Prostate gland (tissue), 2 donors: ENCODE measurements at regions of chr2 and their contacts with region 1.

Region 1: DNA sequence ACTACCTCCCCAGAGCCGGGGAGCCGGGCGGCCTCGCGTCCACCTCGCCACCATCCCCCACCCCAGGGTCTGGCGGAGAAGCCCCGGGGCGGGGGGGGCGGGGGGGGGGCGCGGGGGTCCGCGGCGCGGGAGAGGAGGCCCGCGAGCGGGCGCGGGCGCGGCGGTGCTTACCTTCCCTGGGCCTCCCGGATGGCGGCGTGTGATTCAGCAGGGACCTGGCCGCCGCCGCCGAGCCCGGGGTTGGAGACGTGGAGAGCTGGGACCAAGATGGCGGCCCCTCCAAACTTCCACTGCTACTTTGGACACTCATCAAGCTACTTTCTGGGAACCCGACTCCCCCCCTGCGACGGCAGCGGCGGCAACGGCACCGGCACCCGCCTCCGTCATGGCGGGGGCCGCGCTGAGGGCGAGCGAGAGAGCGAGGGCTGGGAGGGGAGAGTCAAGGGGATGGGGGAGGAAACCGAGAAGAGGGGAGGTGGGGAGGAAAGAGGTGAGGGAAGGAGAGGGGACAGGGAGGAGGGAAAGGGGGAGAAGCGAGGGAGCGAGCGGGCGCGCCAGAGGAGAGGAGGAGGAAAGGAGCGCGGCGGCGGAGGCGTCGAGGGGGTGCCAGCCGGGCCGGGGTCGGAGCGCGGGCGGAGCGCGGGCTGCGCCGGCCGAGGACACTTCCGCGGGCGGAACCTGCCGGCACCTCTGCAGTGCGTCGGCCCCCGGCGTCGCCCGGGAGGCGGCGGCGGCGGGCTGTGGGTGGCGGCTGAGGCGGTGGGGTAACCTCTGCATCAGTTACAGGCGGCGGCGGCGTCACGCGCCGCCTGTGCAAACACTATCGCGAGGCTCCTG is at the start of gene TLK1:
- DNase-seq: peak; percentile 57
- H3K4me3 ChIP-seq: peak within 1 kb of the TSS; percentile 94 to 96
- H3K27ac ChIP-seq: peak within 1 kb of the TSS; percentile 98 to 99
- H3K4me1 ChIP-seq: no peaks in the 10 kb centered on the region
- H3K27me3 ChIP-seq: no peaks in the 10 kb centered on the region
- CTCF ChIP-seq: peak in 1 of 4 experiments; percentile 4
- POLR2A ChIP-seq: peak; percentile 43
- total RNA-seq, gene TLK1: 50.5 to 95.8 TPM

Region 2: DNA sequence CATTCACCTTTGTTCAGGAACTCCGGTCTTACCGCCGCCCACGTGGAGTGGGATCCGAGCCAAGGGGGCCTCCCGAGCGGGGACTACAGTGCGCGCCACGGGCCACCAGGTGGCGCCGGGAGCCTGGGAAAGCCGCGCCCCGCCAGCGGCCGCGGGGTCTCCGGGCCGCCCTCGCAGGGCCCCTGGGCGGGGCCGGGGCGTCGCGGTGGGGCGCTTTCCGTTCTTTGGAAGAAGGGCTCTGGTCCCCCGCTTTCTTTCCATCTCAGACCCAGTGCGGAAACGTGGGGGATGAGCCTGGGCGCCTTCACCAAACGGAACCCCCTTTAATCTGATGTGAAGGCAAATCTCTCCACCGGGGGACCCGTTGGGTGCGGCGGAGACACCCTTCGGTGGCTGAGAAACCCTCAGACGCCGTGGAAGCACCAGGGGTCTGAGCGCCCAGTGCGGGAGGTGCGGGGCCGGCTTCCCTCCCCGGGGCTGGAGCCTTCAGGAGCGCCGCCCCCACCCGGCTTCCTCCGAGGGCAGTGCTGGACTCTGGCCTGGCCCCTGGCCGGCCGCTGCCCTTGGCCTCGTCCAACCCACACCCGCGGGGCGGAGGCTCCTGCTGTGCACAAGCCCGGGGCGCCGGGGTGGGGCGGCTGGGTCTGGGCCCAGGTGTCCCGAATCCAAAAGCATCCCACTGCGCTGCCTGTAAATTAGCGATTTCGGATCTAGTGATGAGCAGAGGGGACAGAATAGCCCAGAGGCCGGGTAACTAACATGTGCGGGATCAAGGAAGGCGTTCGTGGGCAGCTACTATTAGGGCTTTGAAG is 186.6 kb before region 1 on chr2:
- intact Hi-C with region 1: loop called (anchors 1 kb)
- DNase-seq: peak; percentile 86
- H3K4me3 ChIP-seq: peak overlapping the region; percentile 55 to 62
- H3K27ac ChIP-seq: peak overlapping the region; percentile 61 to 71
- H3K4me1 ChIP-seq: no peaks in the 10 kb centered on the region
- H3K27me3 ChIP-seq: no peaks in the 10 kb centered on the region
- CTCF ChIP-seq: peak; percentile 96 to 98 (median 98)
- POLR2A ChIP-seq: no peak

Region 3: GRCh38 chr2:171056307-171056706 is 104.0 kb before region 1 on chr2:
- intact Hi-C with region 1: no loop called
- DNase-seq: no peak
- H3K4me3 ChIP-seq: no peak overlapping the region
- H3K27ac ChIP-seq: no peak overlapping the region
- H3K4me1 ChIP-seq: no peaks in the 10 kb centered on the region
- H3K27me3 ChIP-seq: no peaks in the 10 kb centered on the region
- CTCF ChIP-seq: no peak
- POLR2A ChIP-seq: no peak

Region 4: GRCh38 chr2:171086352-171087290 is 73.7 kb before region 1 on chr2:
- intact Hi-C with region 1: loop called (anchors 10 kb)
- DNase-seq: peak; percentile 16
- H3K4me3 ChIP-seq: no peak overlapping the region
- H3K27ac ChIP-seq: no peak overlapping the region
- H3K4me1 ChIP-seq: no peaks in the 10 kb centered on the region
- H3K27me3 ChIP-seq: no peaks in the 10 kb centered on the region
- CTCF ChIP-seq: peak in 3 of 4 experiments; percentile 19 to 44 (median 36)
- POLR2A ChIP-seq: no peak

Region 5: GRCh38 chr2:171416009-171416926 is 255.9 kb after region 1 on chr2:
- intact Hi-C with region 1: loop called (anchors 5 kb)
- DNase-seq: peak; percentile 94
- H3K4me3 ChIP-seq: no peak overlapping the region
- H3K27ac ChIP-seq: peak overlapping the region; percentile 17 to 59
- H3K4me1 ChIP-seq: no peaks in the 10 kb centered on the region
- H3K27me3 ChIP-seq: no peaks in the 10 kb centered on the region
- CTCF ChIP-seq: peak; percentile 66 to 91 (median 90)
- POLR2A ChIP-seq: no peak

Region 6: GRCh38 chr2:171433763-171434670 is 273.7 kb after region 1 on chr2 and contains the starts of genes DCAF17 and METTL8:
- intact Hi-C with region 1: loop called (anchors 5 kb)
- DNase-seq: peak; percentile 95
- H3K4me3 ChIP-seq: peak within 1 kb of the TSS; percentile 72 to 84
- H3K27ac ChIP-seq: peak within 1 kb of the TSS; percentile 92 to 94
- H3K4me1 ChIP-seq: no peaks in the 10 kb centered on the region
- H3K27me3 ChIP-seq: no peaks in the 10 kb centered on the region
- CTCF ChIP-seq: peak in 2 of 4 experiments; percentile 52
- POLR2A ChIP-seq: no peak
- total RNA-seq, gene DCAF17: 15.5 to 19.1 TPM
- total RNA-seq, gene METTL8: 8.1 to 18.0 TPM